CD14-positive monocyte (primary cell): ENCODE measurements at regions of chr2 and their contacts with region 1.

Region 1: GRCh38 chr2:44093970-44094369 is 74.7 kb upstream of the PPM1B start:
- DNase-seq: no peak
- H3K4me3 ChIP-seq: no peak overlapping the region
- H3K4me3 Mint-ChIP-seq: no peak overlapping the region
- H3K27ac ChIP-seq: no peak overlapping the region
- H3K27ac Mint-ChIP-seq: no peak overlapping the region
- H3K4me1 ChIP-seq: peaks cover 0 to 6% of the 10 kb centered on the region in 2 donors
- H3K4me1 Mint-ChIP-seq: peaks cover 13% of the 10 kb centered on the region
- H3K27me3 ChIP-seq: no peaks in the 10 kb centered on the region
- H3K27me3 Mint-ChIP-seq: peaks cover 0 to 4% (median 0%) of the 10 kb centered on the region in 3 donors
- CTCF ChIP-seq: no peak

Region 2: DNA sequence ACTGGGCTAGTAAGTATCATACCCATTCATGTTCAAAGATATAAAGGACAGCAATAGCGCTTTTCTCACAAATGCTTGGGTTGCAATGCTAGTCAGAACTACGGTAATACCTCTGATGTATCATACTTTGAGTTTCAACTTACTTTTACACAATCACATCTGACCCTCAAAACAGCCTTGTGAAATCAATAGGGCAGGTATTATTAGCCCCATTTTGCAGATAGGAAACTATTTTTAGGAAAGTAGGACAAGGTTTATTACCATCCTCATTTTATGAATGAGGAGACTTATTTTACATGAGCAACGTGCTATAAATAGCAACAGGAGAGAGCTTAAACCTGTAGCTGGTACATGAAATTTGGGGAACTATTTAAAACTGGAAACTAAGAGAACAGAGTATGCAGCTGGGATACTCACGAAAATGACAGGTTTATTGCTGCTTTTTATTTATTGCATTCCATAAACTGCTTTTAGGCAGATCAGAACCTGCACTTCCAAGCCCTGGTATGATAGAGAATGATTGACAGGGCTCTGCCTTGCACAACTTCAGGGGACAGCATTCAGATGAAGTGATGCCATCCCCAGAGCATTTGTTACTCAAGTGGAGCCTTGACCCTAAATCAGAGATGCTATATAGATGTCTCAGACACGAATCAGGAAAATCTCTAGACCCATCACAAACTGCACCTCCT is 32.3 kb after region 1 on chr2:
- intact Hi-C with region 1: loop called in 1 of 2 experiments (anchors 5 kb)
- DNase-seq: no peak
- H3K4me3 ChIP-seq: no peak overlapping the region
- H3K4me3 Mint-ChIP-seq: no peak overlapping the region
- H3K27ac ChIP-seq: no peak overlapping the region
- H3K27ac Mint-ChIP-seq: no peak overlapping the region
- H3K4me1 ChIP-seq: peaks cover 7 to 14% of the 10 kb centered on the region in 2 donors
- H3K4me1 Mint-ChIP-seq: peaks cover 18% of the 10 kb centered on the region
- H3K27me3 ChIP-seq: no peaks in the 10 kb centered on the region
- H3K27me3 Mint-ChIP-seq: peaks cover 0 to 2% (median 0%) of the 10 kb centered on the region in 3 donors
- CTCF ChIP-seq: no peak